H1 (cell line): ENCODE measurements at regions of chr10 and their contacts with region 1.

Region 1: GRCh38 chr10:51083356-51083853 is 9.1 kb downstream of the PRKG1 start:
- DNase-seq: peak in 1 of 2 experiments; percentile 53
- H3K4me3 ChIP-seq: peak overlapping the region in 1 of 4 experiments; percentile 22; a peak in 2 of 8 replicates
- H3K27ac ChIP-seq: peak overlapping the region; percentile 51; the same call in 1 of the 2 replicates
- H3K4me1 ChIP-seq: peaks cover 9 to 21% (median 15%) of the 10 kb centered on the region in 4 experiments; a peak in 6 of 7 replicates
- H3K27me3 ChIP-seq: no peaks in the 10 kb centered on the region
- CTCF ChIP-seq: peak; percentile 36 to 58 (median 42)
- EP300 ChIP-seq: no peak
- POLR2A ChIP-seq: peak in 1 of 2 experiments; percentile 37; a peak in 1 of 3 replicates
- RAD21 ChIP-seq: peak; percentile 6 to 44; a peak in 2 of 4 replicates

Region 2: DNA sequence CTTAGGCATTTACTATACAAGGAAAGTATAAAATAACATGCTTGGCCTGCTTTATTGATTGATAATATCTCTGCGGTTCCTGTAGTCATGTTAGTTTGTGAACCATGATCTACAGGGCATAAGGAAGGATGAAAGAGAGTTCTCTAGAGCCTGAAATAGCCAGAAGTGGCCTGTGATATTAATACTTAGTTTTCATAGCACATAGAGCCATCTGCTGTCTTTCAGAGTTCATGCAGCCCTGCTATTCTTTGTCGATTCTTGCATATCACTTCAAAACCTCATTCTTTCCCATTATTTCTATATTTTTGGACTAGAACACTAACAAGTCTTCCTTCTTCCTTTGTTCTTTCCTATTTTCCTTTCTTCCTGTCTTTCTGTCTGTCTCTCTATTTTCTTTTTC is 35.5 kb before region 1 on chr10:
- CTCF ChIA-PET with region 1: no interaction called
- POLR2A ChIA-PET with region 1: no interaction called
- DNase-seq: no peak
- H3K4me3 ChIP-seq: no peak overlapping the region
- H3K27ac ChIP-seq: no peak overlapping the region
- H3K4me1 ChIP-seq: no peaks in the 10 kb centered on the region
- H3K27me3 ChIP-seq: no peaks in the 10 kb centered on the region
- CTCF ChIP-seq: no peak
- EP300 ChIP-seq: no peak
- POLR2A ChIP-seq: no peak
- RAD21 ChIP-seq: no peak

Region 3: DNA sequence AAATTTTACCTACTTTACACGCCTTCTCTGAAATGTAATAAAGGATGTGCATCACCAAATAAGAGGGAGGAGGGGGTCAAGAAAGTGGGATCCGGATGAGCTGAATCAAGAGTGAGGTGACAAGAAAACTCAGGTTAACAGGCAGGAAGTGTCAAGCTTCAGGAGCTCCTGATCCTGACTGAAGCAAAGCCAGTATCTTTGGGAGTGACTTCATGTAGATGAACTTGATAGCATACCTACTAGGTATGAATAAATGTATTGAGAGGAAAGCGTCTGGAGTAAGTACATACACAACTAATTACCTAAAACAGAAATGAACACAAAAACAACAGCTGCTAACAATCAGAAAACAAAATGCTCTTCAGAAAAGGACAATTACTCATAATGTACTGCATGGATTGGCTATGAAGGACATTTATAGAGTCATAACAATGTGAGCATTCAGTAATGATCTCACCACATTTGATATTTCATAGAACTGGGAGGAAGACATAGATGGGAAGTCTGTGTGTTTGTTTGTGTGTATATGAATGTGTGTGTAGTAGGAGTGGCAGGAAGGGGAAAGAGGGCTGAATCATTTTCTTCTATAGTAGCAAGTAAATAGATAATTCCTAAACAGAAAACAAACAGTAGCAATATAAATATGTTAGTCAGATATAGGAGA is 20.3 kb after region 1 on chr10:
- CTCF ChIA-PET with region 1: interaction called, 14 read pairs
- POLR2A ChIA-PET with region 1: interaction called, 3 read pairs
- DNase-seq: no peak
- H3K4me3 ChIP-seq: no peak overlapping the region
- H3K27ac ChIP-seq: no peak overlapping the region
- H3K4me1 ChIP-seq: no peaks in the 10 kb centered on the region
- H3K27me3 ChIP-seq: peaks cover 0 to 1% (median 0%) of the 10 kb centered on the region in 4 experiments; a peak in 1 of 7 replicates
- CTCF ChIP-seq: no peak
- EP300 ChIP-seq: no peak
- POLR2A ChIP-seq: no peak
- RAD21 ChIP-seq: no peak

Region 4: GRCh38 chr10:51368939-51369338 is 285.5 kb after region 1 on chr10:
- CTCF ChIA-PET with region 1: interaction called, 10 read pairs
- POLR2A ChIA-PET with region 1: interaction called, 3 read pairs
- DNase-seq: no peak
- H3K4me3 ChIP-seq: no peak overlapping the region
- H3K27ac ChIP-seq: no peak overlapping the region
- H3K4me1 ChIP-seq: peaks cover 5 to 16% (median 13%) of the 10 kb centered on the region in 4 experiments; a peak in 6 of 7 replicates
- H3K27me3 ChIP-seq: no peaks in the 10 kb centered on the region; a peak in 1 of 7 replicates
- CTCF ChIP-seq: peak in 2 of 3 experiments; percentile 38 to 61; a peak in 2 of 4 replicates
- EP300 ChIP-seq: no peak
- POLR2A ChIP-seq: no peak
- RAD21 ChIP-seq: peak; percentile 38 to 54